ENCODE measurements at regions of chr17 and their contacts with region 1.

Region 1: DNA sequence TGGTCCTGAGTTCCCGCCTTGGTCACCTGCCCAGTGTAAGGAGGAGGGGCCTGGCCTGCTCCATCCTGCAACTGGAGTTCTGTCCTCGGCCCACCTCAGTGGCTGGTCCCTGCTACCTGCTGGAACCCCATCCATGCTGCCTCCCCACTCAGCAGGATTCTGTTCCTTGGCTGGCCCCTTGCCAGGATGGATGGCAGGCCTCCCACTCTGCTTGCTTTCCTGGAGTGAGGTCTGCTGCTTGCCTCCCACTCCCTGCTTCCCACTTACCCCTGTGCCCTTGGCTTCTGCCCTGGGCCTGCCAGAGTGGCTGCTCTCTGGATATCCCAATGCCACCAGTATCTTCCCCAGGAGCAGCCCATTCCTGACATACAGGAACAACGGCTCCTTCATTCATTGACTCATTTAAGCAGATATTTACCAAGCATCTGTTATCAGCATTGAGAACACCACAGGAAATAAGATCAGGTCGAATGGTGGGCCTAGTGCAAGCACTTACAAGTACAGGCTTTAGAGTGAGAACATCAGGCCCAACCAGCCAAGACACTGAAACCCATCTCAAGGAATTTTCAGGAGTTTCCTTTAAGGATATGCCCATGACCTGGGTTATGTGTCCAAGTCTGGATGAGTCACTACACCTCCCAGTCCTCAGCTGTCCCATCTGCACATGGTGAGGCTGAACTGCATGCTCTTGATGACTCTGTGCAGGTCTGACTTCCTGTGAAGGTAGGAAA is 17.0 kb upstream of the RPRML start:
- DNase-seq: no peak
- H3K4me3 ChIP-seq: no peak overlapping the region
- CTCF ChIP-seq: no peak

Region 2: DNA sequence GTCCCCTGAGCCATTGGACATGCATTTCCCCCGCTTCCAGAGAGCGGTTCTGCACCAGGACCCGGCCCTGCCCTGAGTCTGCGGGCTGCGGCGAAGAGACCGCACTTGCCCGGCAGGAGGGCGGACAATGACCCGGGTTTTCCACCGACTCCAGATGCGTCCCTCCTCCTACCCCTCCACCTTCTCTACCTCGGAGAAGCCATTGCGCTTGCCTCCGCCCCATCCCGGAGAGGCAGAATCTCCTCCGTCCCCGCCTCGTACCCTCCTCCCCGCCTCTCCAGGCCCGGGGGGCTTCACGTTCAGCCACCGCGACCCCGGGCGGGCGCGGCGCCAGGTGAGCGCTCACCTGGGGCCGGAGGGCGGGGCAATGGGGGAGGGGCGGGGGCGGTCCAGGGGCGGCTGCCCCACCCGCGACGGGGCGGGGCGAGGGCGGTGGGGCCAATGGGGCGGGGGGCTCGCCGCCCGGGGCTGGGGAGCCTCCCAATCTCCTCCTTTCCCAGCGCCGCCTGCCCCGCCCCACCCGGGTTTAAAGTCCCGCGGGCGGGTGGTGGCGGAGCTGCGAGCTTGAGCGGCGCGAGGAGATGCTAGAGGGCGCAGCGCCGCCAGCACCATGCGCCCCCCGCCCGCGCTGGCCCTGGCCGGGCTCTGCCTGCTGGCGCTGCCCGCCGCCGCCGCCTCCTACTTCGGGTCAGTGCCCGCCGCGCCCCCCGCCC is 144.8 kb before region 1 on chr17 and contains the start of gene WNT9B:
- CTCF ChIA-PET with region 1: no interaction called
- POLR2A ChIA-PET with region 1: no interaction called
- DNase-seq: no peak
- H3K4me3 ChIP-seq: peak within 1 kb of the TSS; percentile 32
- CTCF ChIP-seq: no peak

Region 3: GRCh38 chr17:46865100-46865499 is 130.9 kb before region 1 on chr17:
- CTCF ChIA-PET with region 1: no interaction called
- POLR2A ChIA-PET with region 1: no interaction called
- DNase-seq: peak; percentile 56
- H3K4me3 ChIP-seq: no peak overlapping the region
- CTCF ChIP-seq: no peak

Region 4: GRCh38 chr17:46949291-46950174 is 46.5 kb before region 1 on chr17:
- CTCF ChIA-PET with region 1: interaction called, 16 read pairs
- POLR2A ChIA-PET with region 1: interaction called, 3 read pairs
- DNase-seq: no peak
- H3K4me3 ChIP-seq: no peak overlapping the region
- CTCF ChIP-seq: no peak

Region 5: DNA sequence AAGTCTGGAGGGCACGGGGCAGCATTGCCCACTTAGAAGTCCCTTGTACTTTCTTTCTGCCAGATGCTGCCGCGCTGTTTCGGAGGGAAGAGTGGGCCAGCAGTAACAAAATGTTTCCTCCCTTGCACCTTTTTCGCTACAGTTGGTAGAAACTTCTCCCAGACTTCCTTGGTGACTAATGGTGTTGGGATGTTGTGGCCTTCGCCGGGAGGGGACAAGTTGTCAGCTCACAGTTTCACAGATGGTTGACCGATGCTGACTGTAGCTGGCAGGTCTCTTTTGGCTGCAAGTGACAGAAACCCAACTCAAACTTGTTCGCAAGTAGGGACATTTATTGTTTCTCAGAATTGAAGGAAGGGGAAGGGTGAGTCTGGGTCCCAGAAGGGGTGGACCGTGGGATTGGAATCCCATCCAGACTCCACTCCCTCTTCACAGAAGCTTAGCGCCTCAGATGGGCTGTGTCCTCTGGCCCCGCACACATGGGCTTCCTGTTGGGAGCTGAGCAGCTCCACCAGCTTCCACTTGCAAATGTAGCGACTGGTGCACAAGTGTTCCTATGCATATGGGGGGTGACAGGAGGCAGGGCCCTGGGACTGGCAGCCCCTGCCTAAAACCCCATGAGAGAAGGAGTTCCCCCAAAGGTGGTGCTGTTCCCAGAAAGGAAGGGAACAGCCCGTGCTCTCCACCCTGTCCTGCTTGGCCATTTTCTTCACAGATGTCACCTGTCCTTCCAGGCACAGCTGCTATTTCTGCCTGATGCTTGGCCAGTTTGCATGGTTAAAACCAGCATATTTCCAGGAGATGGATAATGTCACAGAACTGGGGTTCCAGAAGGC is 14.0 kb after region 1 on chr17:
- CTCF ChIA-PET with region 1: interaction called, 17 read pairs
- POLR2A ChIA-PET with region 1: no interaction called
- DNase-seq: no peak
- H3K4me3 ChIP-seq: no peak overlapping the region
- CTCF ChIP-seq: no peak

Region 6: GRCh38 chr17:47220531-47220999 is 224.6 kb after region 1 on chr17:
- CTCF ChIA-PET with region 1: no interaction called
- POLR2A ChIA-PET with region 1: no interaction called
- DNase-seq: no peak
- H3K4me3 ChIP-seq: no peak overlapping the region
- CTCF ChIP-seq: no peak

Measured in AG04449 (cell line).